Motor neuron (in vitro differentiated cells): ENCODE measurements at regions of chr5 and their contacts with region 1.

Region 1: DNA sequence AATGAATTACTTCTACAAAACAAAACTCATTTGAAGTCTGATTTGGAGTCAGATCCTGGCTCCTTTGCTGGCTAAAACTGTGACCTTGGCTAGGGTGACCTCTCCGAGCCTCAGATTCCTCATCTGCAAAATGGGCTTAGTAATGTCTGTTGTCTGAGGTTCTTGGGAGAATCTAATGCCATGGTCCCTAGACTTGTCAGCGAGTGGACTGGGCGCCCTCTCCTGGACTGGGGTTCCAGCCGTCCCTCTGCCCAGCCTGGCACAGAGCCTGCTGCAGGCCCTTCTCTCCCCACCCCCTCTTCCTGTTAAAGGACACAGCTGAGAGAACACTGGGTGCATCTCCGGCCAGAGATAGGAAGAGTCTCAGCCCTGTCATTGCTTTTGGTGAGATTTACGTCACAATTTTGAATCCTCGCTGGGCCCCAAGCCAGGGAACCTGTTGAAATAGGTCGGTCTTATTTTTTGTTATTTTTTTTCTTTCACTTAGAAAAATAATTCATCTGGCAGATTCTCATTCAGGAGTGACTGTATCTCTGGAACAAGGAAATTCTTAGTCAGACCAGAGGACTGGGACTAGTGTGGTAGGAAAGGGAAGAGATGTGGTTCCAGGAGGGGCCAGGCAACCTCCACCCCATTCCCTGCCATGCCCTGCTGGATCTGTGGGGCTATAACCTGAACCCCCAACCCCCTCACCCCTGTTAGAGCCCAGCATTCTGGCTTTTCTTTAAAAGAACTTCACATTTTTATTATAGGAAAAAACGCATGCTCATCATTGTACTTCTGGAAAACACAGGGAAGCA is 48.2 kb upstream of the RPL26L1 start:
- ATAC-seq: peak in 2 of 8 experiments; percentile 31 to 50
- H3K4me3 ChIP-seq: no peak overlapping the region
- H3K27ac ChIP-seq: no peak overlapping the region
- H3K4me1 ChIP-seq: peaks cover 9 to 12% of the 10 kb centered on the region in 2 donors

Region 2: DNA sequence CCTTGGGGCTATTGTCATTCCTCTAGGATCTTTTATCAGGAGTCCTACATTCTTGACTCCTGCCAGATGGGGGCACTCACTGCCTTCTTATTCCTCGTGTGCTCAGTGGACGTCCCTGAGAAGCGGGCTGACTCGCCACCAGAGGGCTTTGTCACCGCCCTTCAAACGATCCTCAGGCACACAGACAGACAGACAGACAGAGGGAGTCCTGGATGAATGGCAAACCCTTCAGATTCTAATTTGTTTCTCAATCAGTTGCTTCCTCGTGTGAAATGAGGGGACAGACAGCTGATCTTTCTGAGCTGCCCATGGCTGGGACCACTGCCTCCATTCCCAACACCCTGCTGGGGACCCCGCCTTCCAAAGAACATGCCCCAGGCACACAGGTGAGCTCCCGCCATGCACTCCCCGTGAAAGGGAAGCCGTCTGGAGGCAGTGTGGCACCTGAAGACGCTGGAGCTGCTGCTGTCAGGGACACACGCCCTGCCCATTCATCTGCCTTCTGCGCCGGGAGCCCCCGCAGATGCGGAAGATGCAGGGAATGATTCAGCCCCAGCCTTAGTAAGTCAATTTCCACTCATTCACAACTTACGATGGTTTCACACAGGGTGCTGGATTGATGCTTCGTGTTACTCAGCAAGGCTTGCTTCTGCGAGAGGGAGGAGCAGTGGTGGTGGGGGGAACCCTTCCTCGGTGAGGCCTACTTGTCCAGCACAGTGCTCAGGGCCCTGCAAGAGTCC is 431.8 kb before region 1 on chr5:
- in situ Hi-C with region 1: loop called in 1 of 9 experiments (anchors 25 kb)
- ATAC-seq: peak; percentile 79 to 99 (median 93)
- H3K4me3 ChIP-seq: no peak overlapping the region
- H3K27ac ChIP-seq: no peak overlapping the region
- H3K4me1 ChIP-seq: peaks cover 2 to 7% of the 10 kb centered on the region in 2 donors

Region 3: DNA sequence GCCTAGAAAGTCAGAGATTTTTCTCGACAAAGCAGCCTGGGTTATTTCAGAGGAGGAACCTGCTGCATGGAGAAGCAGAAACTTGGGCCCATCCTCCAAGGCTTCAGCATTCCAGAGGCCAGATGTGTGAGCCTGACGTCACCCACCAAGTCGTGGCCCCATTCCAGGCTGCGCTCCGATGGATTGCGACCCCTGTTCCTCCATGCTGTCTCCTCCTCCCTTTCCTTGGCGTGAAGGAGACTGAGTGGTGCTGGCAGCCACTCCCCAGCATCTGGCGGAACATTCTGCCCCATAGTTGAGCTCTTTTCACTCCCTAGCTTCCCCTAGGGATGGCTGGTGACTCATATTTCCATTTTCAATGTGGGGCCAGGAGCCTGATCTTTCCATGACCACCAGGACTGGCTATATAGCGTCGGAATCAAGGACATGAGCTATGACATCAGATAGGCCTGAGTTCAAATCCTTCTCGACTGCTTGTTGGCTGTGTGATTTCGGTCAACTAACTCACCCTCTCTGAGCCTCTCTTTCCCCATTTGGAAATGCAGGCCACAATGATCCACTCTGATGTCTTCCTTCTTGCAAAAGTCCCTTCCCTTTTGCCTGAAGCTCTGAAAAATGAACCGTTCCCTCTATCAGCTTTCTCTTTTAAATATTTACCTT is 115.6 kb before region 1 on chr5:
- in situ Hi-C with region 1: no loop called
- ATAC-seq: peak; percentile 33 to 86 (median 68)
- H3K4me3 ChIP-seq: no peak overlapping the region
- H3K27ac ChIP-seq: peak overlapping the region in 1 of 2 donors; percentile 53
- H3K4me1 ChIP-seq: peaks cover 0 to 3% of the 10 kb centered on the region in 2 donors